BJ (cell line): ENCODE measurements at regions of chr12 and their contacts with region 1.

Region 1: DNA sequence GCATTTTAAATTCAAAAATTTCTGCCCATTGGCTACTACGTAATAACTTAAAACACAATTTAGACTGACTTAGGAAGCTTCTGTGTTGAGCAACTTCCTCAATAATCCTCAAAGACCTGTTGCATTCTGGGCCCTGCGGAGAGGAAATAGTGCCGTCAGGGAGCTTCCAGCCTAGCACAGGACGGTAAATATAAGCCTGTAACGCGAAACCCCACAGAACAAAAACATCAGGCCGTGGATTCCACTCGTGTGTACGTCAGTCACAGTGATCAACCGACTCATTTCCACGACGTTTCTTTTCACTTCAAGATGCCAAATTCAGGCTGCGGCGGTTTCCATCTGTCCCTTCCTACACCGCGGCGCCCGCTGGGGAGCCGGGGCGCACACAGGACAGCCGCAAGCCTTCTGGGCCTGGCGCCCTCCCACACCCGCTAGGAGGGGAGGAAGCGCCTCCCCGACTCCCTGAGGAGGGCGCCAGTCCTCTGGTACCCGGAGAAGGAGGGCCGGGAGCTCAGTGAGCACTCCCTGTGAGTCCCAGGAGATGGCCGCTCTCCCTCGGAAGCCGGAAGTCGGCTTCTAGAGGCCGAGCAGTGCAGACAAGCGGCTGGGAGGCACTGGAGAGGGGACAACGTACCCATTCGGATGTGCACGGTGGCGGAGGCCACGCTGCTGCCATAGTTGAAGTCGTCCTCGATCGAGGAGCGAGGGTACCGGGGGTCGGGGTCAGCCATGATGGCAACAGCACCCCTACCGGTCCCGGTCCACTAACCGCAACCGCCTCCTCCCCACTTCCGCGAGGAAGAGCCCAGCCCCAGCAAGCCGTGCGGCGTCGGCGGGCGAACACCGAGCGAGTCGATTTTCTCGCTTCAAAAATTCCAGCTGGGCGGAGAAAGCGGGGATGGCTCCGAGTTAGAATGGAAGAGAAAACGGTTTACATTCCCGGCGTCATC is at the start of gene TMBIM4:
- DNase-seq: peak; percentile 59
- H3K4me3 ChIP-seq: peak within 1 kb of the TSS; percentile 91
- H3K27me3 ChIP-seq: no peaks in the 10 kb centered on the region
- CTCF ChIP-seq: peak; percentile 50
- polyA plus RNA-seq, gene TMBIM4: 108 and 184 TPM in 2 replicates

Region 2: DNA sequence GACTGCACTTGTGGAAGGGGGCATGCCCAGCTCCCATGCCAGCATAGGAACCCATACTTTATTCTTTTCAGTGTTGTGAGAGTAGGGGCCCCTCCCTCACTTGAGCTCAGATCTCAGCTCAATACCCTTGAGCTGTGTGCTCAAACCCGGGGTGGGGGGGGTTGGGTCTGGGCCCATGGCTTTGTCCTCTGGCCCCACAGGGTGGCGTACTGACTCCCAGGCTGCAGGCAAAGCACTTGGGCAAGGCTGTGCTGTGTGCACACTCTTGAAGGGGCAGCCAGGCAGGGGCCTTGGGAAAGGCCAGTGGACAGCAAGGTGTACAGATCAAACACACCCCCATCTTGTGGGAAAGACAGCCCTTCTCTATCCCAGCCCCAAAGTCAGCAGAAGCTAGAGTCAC is 1130.2 kb before region 1 on chr12:
- CTCF ChIA-PET with region 1: no interaction called
- POLR2A ChIA-PET with region 1: interaction called, 10 read pairs
- DNase-seq: no peak
- H3K4me3 ChIP-seq: no peak overlapping the region
- H3K27me3 ChIP-seq: no peaks in the 10 kb centered on the region
- CTCF ChIP-seq: no peak